ENCODE measurements at regions of chr2 and their contacts with region 1.

Region 1: DNA sequence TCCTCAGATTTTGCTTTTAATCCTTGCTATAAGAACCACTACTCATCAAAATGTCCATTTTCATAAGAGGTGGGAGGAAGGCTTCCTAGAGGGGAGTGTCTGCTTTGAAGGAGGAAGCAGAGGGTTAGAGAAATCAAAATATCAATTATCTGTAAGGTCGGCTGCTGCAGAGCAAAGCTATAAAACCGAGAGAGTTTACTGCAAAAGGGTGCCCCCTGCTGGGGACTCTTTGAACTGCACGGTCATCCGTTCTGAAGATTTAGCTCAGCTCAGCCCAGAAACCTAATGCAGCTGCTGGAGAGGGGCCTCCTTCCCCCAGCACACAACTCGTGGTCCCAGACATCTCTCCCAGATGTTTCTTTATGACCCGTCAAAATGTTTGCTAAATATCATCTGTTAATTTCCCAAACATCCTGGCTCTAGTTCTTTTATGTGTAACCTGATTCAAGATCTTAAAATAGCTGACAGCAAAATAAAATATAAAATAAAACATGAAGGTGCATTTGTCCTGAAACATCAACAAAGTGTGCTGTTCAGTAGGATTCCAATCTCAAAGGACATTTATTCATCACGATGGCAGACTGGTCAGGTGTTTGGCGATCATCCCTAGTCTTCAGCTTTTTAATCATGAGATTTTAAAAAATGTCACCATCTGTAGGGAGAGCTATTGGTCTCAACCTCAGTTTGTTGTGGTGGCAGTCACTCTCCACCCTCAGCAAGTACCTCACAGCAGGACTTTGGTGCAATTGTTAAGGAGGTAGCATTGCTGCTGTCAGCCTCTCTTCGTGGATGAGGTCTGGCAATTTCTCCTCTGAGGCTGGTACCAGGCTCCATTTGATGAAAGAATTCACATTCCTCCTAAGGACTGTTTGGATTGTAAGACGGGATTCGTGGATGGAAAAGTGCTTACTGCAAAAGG is 185.9 kb downstream of the MTX2 start:
- DNase-seq: peak; percentile 17 to 55 (median 45)
- H3K4me3 ChIP-seq: no peak overlapping the region
- H3K4me3 Mint-ChIP-seq: no peak overlapping the region
- H3K27ac ChIP-seq: no peak overlapping the region
- H3K27ac Mint-ChIP-seq: no peak overlapping the region
- H3K4me1 ChIP-seq: no peaks in the 10 kb centered on the region
- H3K4me1 Mint-ChIP-seq: no peaks in the 10 kb centered on the region
- H3K27me3 ChIP-seq: peaks cover 12 to 29% of the 10 kb centered on the region in 2 donors
- H3K27me3 Mint-ChIP-seq: peaks cover 17 to 33% (median 20%) of the 10 kb centered on the region in 3 donors
- CTCF ChIP-seq: peak; percentile 92

Region 2: GRCh38 chr2:175366815-175367214 is 1088.3 kb before region 1 on chr2:
- intact Hi-C with region 1: loop called in 1 of 2 experiments (anchors 10 kb)
- DNase-seq: peak; percentile 27 to 49 (median 44)
- H3K4me3 ChIP-seq: no peak overlapping the region
- H3K4me3 Mint-ChIP-seq: no peak overlapping the region
- H3K27ac ChIP-seq: no peak overlapping the region
- H3K27ac Mint-ChIP-seq: no peak overlapping the region
- H3K4me1 ChIP-seq: peaks cover 1 to 6% of the 10 kb centered on the region in 2 donors
- H3K4me1 Mint-ChIP-seq: peaks cover 8% of the 10 kb centered on the region
- H3K27me3 ChIP-seq: peaks cover 24 to 42% of the 10 kb centered on the region in 2 donors
- H3K27me3 Mint-ChIP-seq: peaks cover 15 to 31% (median 16%) of the 10 kb centered on the region in 3 donors
- CTCF ChIP-seq: peak; percentile 84

Region 3: DNA sequence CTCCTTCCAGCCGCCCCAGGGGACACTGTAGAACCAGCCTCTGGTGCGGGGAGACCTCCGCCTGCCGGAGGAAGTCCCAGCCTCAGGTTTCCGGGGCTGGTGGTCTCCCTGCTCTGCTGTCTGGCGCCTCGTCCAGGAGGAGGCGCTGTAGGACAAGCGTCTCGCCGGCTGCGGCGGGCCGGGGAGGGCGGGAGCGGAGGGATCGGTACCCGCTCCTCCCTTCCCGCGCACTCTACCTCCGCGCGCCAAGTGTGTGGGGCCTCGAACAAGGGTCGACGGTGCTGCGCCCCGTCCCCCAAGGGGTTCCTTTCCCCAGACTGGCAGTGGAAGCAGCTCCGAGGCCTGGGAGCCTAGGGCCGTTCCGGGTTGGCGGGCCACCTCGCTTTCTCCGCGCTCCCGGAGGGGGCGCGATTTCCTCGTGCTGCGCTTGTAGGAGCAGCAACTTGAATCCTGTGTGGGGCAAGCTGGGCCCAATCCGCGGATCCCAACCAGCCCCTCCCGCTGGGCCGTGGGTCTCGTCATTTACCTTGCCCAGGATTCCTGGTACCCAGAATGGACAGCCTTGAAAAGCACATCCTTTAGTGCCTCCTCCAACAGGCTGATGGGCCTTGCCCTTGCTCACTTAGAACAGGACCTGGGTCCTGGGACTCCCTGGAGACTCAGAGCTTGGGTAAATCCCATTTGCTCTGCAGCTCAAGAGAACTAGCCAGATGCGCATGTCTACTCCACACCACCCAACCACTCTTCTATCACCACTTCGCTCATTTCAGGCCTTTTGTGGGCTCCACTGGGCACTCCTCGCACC is 314.4 kb before region 1 on chr2:
- intact Hi-C with region 1: loop called in 1 of 2 experiments (anchors 5 kb)
- DNase-seq: peak in 2 of 3 donors; percentile 14 to 38
- H3K4me3 ChIP-seq: peak overlapping the region in 1 of 3 experiments; percentile 51
- H3K4me3 Mint-ChIP-seq: peak overlapping the region; percentile 43 to 87
- H3K27ac ChIP-seq: no peak overlapping the region
- H3K27ac Mint-ChIP-seq: peak overlapping the region in 1 of 7 donors; percentile 57
- H3K4me1 ChIP-seq: peaks cover 17 to 19% of the 10 kb centered on the region in 2 donors
- H3K4me1 Mint-ChIP-seq: peaks cover 28% of the 10 kb centered on the region
- H3K27me3 ChIP-seq: peaks cover 93 to 96% of the 10 kb centered on the region in 2 donors
- H3K27me3 Mint-ChIP-seq: peaks cover 92 to 100% (median 93%) of the 10 kb centered on the region in 3 donors
- CTCF ChIP-seq: peak; percentile 84

Measured in CD14-positive monocyte (primary cell).